Activated B cell treated with CpG ODN at 0.5 μM for 24 hours (primary cell): ENCODE measurements at regions of chr6 and their contacts with region 1.

Region 1: GRCh38 chr6:157021344-157021992 is 244.3 kb downstream of the ARID1B start:
- DNase-seq: peak; percentile 87
- ATAC-seq: peak; percentile 79
- H3K4me3 Mint-ChIP-seq: peak overlapping the region; percentile 90
- H3K27ac Mint-ChIP-seq: peak overlapping the region; percentile 98
- H3K4me1 Mint-ChIP-seq: peaks cover 66% of the 10 kb centered on the region
- H3K27me3 Mint-ChIP-seq: no peaks in the 10 kb centered on the region
- CTCF ChIP-seq: no peak

Region 2: GRCh38 chr6:156396068-156396771 is 625.2 kb before region 1 on chr6:
- CTCF ChIA-PET with region 1: no interaction called
- POLR2A ChIA-PET with region 1: no interaction called
- intact Hi-C with region 1: loop called (anchors 2 kb)
- DNase-seq: no peak
- ATAC-seq: peak; percentile 62
- H3K4me3 Mint-ChIP-seq: peak overlapping the region; percentile 68
- H3K27ac Mint-ChIP-seq: peak overlapping the region; percentile 84
- H3K4me1 Mint-ChIP-seq: peaks cover 76% of the 10 kb centered on the region
- H3K27me3 Mint-ChIP-seq: no peaks in the 10 kb centered on the region
- CTCF ChIP-seq: no peak

Region 3: GRCh38 chr6:156634951-156635371 is 386.5 kb before region 1 on chr6:
- CTCF ChIA-PET with region 1: interaction called, 3 read pairs
- POLR2A ChIA-PET with region 1: no interaction called
- intact Hi-C with region 1: loop called (anchors 2 kb)
- DNase-seq: no peak
- ATAC-seq: no peak
- H3K4me3 Mint-ChIP-seq: peak overlapping the region; percentile 79
- H3K27ac Mint-ChIP-seq: peak overlapping the region; percentile 95
- H3K4me1 Mint-ChIP-seq: peaks cover 54% of the 10 kb centered on the region
- H3K27me3 Mint-ChIP-seq: no peaks in the 10 kb centered on the region
- CTCF ChIP-seq: no peak

Region 4: GRCh38 chr6:156976216-156977127 is 45.0 kb before region 1 on chr6:
- CTCF ChIA-PET with region 1: interaction called, 3 read pairs
- POLR2A ChIA-PET with region 1: interaction called, 8 read pairs
- intact Hi-C with region 1: loop called (anchors 2 kb)
- DNase-seq: no peak
- ATAC-seq: peak; percentile 69
- H3K4me3 Mint-ChIP-seq: peak overlapping the region; percentile 79
- H3K27ac Mint-ChIP-seq: peak overlapping the region; percentile 84
- H3K4me1 Mint-ChIP-seq: peaks cover 94% of the 10 kb centered on the region
- H3K27me3 Mint-ChIP-seq: no peaks in the 10 kb centered on the region
- CTCF ChIP-seq: no peak

Region 5: DNA sequence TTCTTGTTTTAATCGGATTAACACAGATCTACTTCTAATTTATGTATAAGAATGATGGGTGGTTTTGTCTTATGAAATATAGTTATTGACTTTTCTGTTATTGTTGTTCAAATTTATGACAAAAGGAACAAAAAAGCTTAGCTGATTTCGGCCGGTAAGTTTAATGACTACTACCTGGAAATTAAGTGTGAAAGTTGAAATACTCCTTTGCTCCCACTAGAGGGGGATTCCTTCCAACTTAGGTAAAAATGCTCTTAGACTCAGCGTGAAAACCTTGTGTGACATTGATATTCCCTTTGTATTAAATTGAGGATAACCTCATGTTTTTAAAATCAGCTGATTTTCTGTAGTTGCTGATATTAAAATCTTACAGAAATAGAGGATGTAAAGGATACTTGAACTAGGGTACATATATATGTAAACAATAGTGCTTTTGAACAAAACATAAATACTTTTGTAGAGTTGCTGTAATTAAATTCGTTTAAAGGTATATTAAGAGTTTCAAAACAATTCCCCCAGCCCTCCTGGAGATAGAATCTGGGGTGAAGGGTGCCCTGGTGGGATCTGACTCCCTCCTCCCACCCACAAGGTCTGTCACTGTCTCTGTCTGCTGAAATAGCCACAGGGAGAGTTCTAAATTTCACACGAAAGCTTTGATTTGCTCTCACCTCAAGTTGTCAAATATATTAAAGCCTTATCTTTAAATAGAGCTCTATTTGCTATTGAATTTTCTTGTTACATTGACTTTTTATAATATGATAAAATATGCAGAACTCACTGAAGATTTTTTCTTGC is 13.2 kb after region 1 on chr6:
- CTCF ChIA-PET with region 1: interaction called, 4 read pairs
- POLR2A ChIA-PET with region 1: interaction called, 4 read pairs
- intact Hi-C with region 1: loop called (anchors 1 kb)
- DNase-seq: no peak
- ATAC-seq: peak; percentile 64
- H3K4me3 Mint-ChIP-seq: peak overlapping the region; percentile 61
- H3K27ac Mint-ChIP-seq: peak overlapping the region; percentile 63
- H3K4me1 Mint-ChIP-seq: peaks cover 39% of the 10 kb centered on the region
- H3K27me3 Mint-ChIP-seq: no peaks in the 10 kb centered on the region
- CTCF ChIP-seq: no peak

Region 6: DNA sequence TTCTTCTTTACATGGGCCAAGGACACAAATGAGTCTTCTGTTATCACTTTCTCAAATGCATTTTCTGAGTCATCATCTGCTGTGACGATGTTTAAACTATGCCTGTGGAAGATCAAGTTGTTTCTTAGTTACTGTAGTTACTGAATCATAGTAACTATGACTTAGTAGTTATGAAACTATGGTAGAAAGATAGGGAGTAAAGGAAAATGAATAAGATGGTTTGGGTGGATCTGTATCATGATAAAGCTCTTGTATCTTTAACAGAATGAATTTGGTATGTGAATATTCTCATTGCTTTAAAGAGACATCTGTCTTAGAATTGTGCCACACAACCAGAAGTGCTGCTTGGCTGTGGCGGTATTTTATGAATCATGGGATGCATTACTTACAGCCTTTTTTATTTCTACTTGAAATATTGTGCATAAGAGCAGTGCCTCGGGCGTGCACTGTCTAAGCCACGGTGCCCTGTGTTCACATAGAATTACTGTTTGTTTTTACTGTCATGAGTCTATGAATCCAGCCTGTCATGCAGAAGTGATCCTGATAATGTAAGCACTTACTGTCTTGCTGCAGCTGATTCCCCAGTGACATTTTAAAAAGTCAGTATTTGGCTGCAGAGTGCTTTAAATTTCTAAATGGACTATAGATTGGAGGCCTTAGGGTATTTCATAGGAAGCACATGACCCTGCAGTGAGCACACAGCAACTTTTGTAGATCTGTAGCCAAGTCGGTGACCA is 86.6 kb after region 1 on chr6:
- CTCF ChIA-PET with region 1: no interaction called
- POLR2A ChIA-PET with region 1: no interaction called
- intact Hi-C with region 1: no loop called
- DNase-seq: no peak
- ATAC-seq: no peak
- H3K4me3 Mint-ChIP-seq: no peak overlapping the region
- H3K27ac Mint-ChIP-seq: no peak overlapping the region
- H3K4me1 Mint-ChIP-seq: peaks cover 26% of the 10 kb centered on the region
- H3K27me3 Mint-ChIP-seq: no peaks in the 10 kb centered on the region
- CTCF ChIP-seq: no peak

Region 7: GRCh38 chr6:157274471-157275226 is 253.2 kb after region 1 on chr6:
- CTCF ChIA-PET with region 1: no interaction called
- POLR2A ChIA-PET with region 1: no interaction called
- intact Hi-C with region 1: loop called (anchors 1 kb)
- DNase-seq: peak; percentile 93
- ATAC-seq: peak; percentile 79
- H3K4me3 Mint-ChIP-seq: peak overlapping the region; percentile 94
- H3K27ac Mint-ChIP-seq: peak overlapping the region; percentile 96
- H3K4me1 Mint-ChIP-seq: peaks cover 9% of the 10 kb centered on the region
- H3K27me3 Mint-ChIP-seq: no peaks in the 10 kb centered on the region
- CTCF ChIP-seq: no peak

Region 8: DNA sequence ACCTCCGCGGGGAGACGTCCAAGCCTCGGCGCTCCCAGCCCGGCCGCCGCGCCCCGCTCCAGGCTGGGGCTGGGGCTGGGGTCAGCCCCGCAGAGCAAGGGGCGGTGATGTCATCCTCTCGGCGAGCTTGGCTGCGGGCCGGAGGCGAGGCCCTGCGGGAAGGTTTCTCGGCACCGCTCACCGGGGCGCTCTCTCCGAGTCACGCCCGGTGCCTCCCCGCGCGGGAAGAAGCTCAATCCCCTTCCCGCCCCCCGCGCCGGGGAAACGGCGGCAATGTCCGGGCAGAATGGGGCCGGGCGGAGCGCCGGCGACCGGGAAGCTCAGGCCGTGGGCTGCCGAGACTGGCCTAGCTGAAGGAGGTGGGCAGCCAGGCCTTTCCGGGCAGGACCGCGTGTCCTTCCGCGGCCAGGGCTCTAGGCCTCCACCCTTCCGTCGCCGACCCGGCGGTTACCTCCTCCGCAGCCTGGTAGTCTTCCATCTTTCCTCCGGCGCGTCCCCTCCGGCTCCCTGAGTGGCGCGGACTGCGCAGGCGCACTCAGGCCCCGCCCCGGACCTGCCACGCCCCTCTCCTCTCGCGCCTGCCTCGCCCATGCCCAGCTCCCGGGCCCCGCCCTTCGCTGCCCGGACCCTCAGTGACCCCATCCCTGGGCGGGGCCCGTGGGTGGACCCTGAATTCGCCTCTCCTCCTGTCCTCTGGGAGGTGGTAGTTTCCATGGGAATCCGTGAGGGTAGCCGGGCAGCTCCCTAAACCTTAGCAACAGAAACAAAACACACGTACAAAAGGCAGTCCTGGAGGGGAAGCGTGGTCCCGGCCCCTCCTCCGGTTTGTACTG is 1623.0 kb after region 1 on chr6 and contains the start of gene DYNLT1:
- CTCF ChIA-PET with region 1: no interaction called
- POLR2A ChIA-PET with region 1: no interaction called
- intact Hi-C with region 1: loop called (anchors 5 kb)
- DNase-seq: peak; percentile 97
- ATAC-seq: peak; percentile 68
- H3K4me3 Mint-ChIP-seq: peak within 1 kb of the TSS; percentile 95
- H3K27ac Mint-ChIP-seq: peak within 1 kb of the TSS; percentile 85
- H3K4me1 Mint-ChIP-seq: peaks cover 52% of the 10 kb centered on the region
- H3K27me3 Mint-ChIP-seq: no peaks in the 10 kb centered on the region
- CTCF ChIP-seq: no peak
- total RNA-seq, gene DYNLT1: 37.7 and 43.9 TPM in 2 replicates